HCT116 (cell line): ENCODE measurements at regions of chr2 and their contacts with region 1.

Region 1: DNA sequence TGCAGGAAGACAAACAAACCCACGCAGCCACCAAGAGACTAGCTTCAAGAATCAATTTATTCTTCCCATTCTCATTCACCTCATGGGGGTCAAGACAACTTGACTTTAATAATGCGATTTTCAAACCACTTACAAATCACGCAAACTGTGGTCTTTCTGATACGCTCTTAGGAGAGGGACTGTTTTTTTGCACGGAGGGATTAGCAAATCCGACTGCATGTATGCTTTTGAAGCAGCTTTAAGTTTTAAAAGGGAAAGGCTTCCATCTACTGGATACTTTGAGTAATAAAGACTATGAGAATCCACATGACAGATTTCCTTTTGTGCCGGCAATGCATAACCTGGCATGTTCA is 322.9 kb upstream of the KCNJ3 start:
- DNase-seq: peak; percentile 56
- ATAC-seq: peak; percentile 80
- H3K4me3 ChIP-seq: no peak overlapping the region
- H3K27ac ChIP-seq: no peak overlapping the region
- H3K4me1 ChIP-seq: no peaks in the 10 kb centered on the region
- H3K27me3 ChIP-seq: no peaks in the 10 kb centered on the region
- CTCF ChIP-seq: peak; percentile 25 to 58 (median 48); a peak in 4 of 6 replicates
- POLR2A ChIP-seq: no peak
- RAD21 ChIP-seq: peak; percentile 74

Region 2: DNA sequence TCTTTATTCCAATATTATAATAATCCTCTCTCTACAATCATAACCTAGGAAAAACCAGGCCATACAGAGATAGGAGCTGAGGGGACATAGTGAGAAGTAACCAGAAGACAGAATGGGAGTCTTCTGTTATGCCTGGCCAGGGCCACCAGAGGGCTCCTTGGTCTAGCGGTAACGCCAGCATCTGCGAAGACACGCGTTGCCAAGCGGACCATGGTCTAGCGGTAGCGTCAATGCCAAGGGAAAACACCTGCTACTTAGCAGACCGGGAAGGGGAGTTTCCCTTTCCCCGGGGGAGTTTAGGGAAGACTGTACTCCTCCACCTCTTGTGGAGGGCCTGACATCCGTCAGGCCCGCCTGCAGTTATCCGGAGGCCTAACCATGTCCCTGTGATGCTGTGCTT is 1620.5 kb before region 1 on chr2:
- CTCF ChIA-PET with region 1: no interaction called
- POLR2A ChIA-PET with region 1: no interaction called
- RAD21 ChIA-PET with region 1: no interaction called
- intact Hi-C with region 1: loop called (anchors 10 kb)
- DNase-seq: no peak
- ATAC-seq: peak; percentile 52; the same call in 1 of the 2 replicates
- H3K4me3 ChIP-seq: no peak overlapping the region
- H3K27ac ChIP-seq: no peak overlapping the region
- H3K4me1 ChIP-seq: no peaks in the 10 kb centered on the region
- H3K27me3 ChIP-seq: no peaks in the 10 kb centered on the region
- CTCF ChIP-seq: peak; percentile 13 to 57 (median 56); a peak in 4 of 6 replicates
- POLR2A ChIP-seq: no peak
- RAD21 ChIP-seq: peak; percentile 35

Region 3: DNA sequence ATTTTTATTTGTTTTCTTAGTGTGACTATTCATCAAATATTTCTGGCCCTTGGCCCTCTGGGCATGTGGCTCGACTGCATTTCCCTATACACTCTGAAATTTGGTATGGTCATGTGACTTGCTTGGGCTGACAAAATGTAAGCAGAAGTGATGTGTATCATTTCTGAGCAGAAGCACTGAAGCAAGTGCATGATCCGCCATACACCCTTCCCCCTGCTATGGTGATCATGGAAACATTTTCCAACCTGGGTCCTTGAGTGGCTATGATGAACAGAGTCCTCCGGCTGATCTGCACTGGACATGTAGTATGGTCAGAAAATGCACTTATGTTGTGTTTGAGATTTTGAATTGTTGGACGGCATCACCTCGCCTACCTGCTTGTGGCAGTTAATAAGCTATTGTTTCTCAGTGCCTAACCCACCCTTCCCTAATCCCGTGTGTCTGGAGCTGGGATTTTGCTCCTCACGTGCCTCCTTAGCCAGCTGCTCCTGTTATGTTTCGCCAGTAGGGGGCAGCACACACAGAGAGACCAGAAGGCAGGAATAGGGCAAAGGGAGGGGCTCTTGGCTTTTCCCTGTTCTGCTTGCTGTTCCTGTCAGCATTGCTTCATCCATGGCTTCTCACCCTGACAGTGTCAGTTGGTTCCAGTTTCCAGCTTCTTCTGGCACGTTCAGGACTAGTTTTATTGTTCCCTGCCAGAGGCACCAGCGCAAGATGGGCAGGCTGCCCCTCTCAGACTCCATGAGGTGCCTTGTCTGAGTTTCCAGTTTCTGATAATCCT is 1449.8 kb before region 1 on chr2:
- CTCF ChIA-PET with region 1: interaction called, 11 read pairs
- POLR2A ChIA-PET with region 1: no interaction called
- RAD21 ChIA-PET with region 1: no interaction called
- intact Hi-C with region 1: loop called (anchors 1 kb)
- DNase-seq: peak; percentile 79
- ATAC-seq: peak; percentile 98
- H3K4me3 ChIP-seq: no peak overlapping the region
- H3K27ac ChIP-seq: no peak overlapping the region
- H3K4me1 ChIP-seq: peaks cover 0 to 12% of the 10 kb centered on the region in 2 experiments; a peak in 1 of 4 replicates
- H3K27me3 ChIP-seq: no peaks in the 10 kb centered on the region; the same call in 1 of the 2 replicates
- CTCF ChIP-seq: peak; percentile 71 to 95 (median 91)
- POLR2A ChIP-seq: no peak
- RAD21 ChIP-seq: peak; percentile 80

Region 4: DNA sequence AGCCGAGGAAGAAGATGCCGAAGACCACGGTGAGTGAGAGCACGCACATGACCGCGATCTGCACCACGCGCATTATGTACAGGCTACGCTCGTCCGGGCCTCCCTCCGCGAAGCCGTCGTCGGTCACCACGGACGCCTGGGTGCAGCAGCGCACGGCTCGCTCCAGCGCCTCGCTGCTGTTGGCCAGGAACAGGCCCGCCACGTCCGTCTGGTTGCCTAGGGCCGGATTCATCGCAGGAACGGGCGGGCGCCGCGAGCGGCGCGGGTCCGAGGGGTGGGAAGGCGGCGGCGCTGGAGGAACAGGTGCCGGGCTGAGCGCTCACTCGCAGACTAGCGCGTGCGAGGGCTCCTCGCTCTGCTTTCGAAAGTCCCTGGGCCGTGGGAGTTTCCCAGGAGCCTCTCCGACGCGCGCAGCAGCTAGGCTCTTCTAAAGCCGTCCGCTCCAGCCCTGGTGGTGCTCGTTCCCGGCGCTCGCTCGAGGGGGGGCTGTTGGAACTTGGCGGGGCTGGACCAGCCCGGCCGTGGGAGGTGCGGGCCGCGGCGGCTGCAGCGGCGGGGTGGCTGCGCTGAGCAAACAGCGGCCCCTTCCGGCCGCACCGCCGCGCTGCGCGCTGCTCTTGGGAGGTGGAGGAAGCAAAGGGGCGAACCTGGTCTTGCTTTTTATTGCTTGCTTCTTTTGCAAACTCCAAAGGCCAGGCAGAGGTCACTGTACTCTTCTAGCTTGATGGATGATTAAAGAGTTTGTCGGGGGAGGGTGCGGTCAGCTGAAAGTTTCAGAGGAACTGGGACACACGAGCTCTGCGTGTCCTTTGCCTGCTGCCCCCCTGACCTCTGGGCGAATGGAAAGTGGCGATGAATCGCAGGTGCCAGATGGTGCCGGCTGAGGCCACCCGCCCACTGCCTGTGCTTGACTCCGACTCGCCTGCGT is 897.0 kb before region 1 on chr2 and contains the start of gene RPRM:
- CTCF ChIA-PET with region 1: no interaction called
- POLR2A ChIA-PET with region 1: no interaction called
- RAD21 ChIA-PET with region 1: no interaction called
- intact Hi-C with region 1: loop called (anchors 2 kb)
- DNase-seq: peak; percentile 29
- ATAC-seq: peak; percentile 98
- H3K4me3 ChIP-seq: peak within 1 kb of the TSS; percentile 38 to 54
- H3K27ac ChIP-seq: no peak within 1 kb of the TSS
- H3K4me1 ChIP-seq: peaks cover 0 to 10% of the 10 kb centered on the region in 2 experiments; a peak in 3 of 4 replicates
- H3K27me3 ChIP-seq: no peaks in the 10 kb centered on the region
- CTCF ChIP-seq: peak; percentile 48 to 94 (median 88); a peak in 5 of 6 replicates
- POLR2A ChIP-seq: no peak
- RAD21 ChIP-seq: peak; percentile 87
- total RNA-seq, gene RPRM: not detected

Region 5: DNA sequence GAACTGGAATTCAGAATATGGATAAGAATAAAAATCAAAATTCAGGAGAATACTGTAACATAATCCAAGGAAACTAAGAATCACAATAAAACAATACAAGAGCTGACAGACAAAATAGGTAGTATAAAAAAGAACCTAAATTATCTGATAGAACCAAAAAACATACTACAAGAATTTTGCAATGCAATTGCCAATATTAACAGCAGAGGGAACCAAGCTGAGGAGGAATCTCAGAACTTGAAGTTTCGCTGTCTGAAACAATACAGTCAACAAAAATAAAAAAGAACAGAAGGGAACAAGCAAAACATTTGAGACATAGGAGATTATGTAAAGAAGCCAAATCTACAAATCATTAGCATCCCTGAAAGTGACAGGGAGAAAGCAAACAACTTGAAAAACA is 587.9 kb before region 1 on chr2:
- CTCF ChIA-PET with region 1: interaction called, 7 read pairs
- POLR2A ChIA-PET with region 1: no interaction called
- RAD21 ChIA-PET with region 1: no interaction called
- intact Hi-C with region 1: loop called (anchors 5 kb)
- DNase-seq: no peak
- ATAC-seq: no peak
- H3K4me3 ChIP-seq: no peak overlapping the region
- H3K27ac ChIP-seq: no peak overlapping the region
- H3K4me1 ChIP-seq: no peaks in the 10 kb centered on the region
- H3K27me3 ChIP-seq: no peaks in the 10 kb centered on the region
- CTCF ChIP-seq: peak in 1 of 3 experiments; percentile 20; a peak in 1 of 6 replicates
- POLR2A ChIP-seq: no peak
- RAD21 ChIP-seq: no peak

Region 6: DNA sequence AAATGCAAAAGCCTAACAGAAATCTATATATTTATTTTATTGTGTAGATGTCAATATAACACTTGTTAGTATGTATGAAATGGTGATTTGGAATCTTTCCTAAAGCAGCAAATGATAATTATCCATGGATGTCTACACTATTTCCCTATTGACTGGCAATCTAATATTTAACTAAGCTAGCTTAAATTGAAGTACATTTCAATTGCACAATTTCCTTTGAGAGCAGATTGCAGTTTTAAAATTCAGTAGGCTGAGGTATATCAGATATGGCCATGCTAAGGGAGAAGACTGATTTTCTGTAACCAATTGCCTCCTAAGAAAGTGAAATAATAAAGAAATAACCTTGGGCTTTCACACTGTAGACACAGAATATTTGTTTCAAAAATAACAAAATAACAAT is 232.9 kb after region 1 on chr2:
- CTCF ChIA-PET with region 1: no interaction called
- POLR2A ChIA-PET with region 1: no interaction called
- RAD21 ChIA-PET with region 1: no interaction called
- intact Hi-C with region 1: no loop called
- DNase-seq: no peak
- ATAC-seq: no peak
- H3K4me3 ChIP-seq: no peak overlapping the region
- H3K27ac ChIP-seq: no peak overlapping the region
- H3K4me1 ChIP-seq: no peaks in the 10 kb centered on the region
- H3K27me3 ChIP-seq: no peaks in the 10 kb centered on the region
- CTCF ChIP-seq: no peak
- POLR2A ChIP-seq: no peak
- RAD21 ChIP-seq: no peak

Region 7: DNA sequence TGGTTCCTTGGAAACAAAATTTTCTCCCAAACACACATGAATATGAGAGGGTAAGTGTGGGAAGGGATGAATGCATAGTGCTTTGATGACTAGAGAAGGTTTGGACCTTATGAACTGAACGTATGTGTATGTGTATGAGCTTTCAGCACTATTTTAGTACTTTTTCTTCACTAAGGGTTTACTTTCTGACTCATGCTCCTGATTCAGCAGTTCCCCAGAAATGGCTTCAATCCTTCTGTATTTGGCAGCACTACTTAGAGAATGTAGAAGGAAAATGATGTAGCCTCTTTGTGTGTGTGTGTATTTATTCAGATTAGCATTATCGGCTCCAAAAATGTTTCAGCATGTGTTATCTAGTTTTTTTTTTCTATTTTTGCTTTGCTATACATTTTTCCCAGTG is 345.1 kb after region 1 on chr2:
- CTCF ChIA-PET with region 1: no interaction called
- POLR2A ChIA-PET with region 1: no interaction called
- RAD21 ChIA-PET with region 1: no interaction called
- intact Hi-C with region 1: no loop called
- DNase-seq: no peak
- ATAC-seq: no peak
- H3K4me3 ChIP-seq: no peak overlapping the region
- H3K27ac ChIP-seq: no peak overlapping the region
- H3K4me1 ChIP-seq: no peaks in the 10 kb centered on the region
- H3K27me3 ChIP-seq: no peaks in the 10 kb centered on the region
- CTCF ChIP-seq: no peak
- POLR2A ChIP-seq: no peak
- RAD21 ChIP-seq: no peak